ENCODE measurements at regions of chr9 and their contacts with region 1.

Region 1: DNA sequence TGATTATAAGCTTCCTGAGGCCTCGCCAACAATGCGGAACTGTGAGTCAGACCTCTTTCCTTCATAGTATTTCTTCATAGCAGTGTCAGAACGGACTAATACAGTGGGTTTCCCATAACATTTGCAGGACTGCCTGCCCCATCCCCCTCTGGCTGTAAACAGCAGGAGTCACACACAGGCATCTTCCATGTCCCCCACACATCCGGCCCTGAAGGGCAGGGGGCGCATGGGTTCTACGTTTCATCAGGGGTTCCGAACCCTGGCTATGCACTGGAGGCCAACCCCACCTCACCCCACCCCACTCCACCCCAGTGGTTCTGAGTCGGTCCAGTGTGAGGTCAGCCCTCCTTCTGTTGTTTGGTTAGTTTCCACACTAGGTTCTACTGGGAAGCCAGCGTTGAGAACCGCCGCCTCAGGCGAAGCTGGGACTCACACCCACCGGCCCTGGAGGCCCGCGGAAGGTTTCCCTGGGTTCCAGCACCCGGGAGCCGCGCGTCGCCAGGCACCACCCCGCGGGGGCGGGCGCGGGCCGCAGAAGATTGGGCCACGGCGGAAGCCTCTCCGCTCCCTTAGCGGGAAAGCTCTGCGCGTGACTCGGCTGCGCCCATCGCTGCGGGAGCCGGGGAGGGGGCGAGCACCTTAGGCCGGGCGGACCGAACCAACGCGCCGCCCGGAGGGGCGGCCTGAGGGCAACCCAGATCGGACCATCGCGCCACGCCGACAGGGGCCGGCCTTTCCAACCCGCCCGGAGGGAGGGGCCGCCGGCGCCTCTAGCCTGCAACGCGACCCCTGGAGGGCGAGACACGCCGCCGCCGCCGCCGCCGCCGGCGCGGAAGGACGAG is at the start of gene RUSC2:
- DNase-seq: peak; percentile 73 to 91 (median 83)

Region 2: DNA sequence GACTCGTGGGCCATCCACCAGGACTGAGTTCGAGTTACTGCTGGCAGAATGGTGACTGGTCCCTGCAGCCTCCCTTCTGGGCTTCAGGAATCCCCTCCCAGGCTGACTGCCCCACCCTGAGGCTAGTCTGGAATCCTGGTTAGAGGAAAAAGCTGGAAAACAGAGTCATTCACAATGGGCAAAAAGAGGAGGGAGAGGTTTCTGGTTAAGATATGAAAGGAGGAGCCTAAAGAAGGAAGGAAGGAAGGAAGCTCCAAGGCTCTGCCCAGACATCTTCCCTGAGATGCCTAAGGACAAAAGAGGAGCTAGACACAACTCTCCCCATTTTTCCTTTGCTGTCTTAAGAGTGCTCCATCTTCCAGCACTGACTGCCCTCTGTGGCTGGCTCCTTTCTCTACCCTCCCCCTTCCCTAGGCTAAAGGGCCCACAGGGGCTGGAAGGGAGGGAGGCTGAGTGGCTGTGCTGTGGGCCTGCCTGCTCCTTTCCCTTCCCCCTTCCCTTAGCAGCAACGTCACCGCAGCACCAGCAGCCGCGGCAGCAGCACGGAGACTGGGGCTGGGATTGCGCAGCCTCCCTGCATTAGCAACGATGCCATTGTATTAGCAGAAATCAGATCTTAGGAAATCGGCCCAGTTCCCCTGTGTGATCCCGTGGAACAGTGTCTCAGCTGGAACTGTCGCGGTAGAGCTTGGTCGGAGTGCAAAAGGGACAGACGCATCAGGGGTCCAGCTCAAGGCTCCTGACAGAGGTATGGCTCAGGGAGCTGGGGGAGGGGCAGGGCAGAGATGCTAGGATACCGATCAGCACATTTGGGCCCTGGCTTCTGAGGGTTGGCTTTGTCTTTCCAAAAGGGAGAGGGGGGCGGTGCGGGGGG is 49.1 kb after region 1 on chr9:
- intact Hi-C with region 1: loop called (anchors 5 kb)
- DNase-seq: peak; percentile 74 to 93 (median 87)

Region 3: DNA sequence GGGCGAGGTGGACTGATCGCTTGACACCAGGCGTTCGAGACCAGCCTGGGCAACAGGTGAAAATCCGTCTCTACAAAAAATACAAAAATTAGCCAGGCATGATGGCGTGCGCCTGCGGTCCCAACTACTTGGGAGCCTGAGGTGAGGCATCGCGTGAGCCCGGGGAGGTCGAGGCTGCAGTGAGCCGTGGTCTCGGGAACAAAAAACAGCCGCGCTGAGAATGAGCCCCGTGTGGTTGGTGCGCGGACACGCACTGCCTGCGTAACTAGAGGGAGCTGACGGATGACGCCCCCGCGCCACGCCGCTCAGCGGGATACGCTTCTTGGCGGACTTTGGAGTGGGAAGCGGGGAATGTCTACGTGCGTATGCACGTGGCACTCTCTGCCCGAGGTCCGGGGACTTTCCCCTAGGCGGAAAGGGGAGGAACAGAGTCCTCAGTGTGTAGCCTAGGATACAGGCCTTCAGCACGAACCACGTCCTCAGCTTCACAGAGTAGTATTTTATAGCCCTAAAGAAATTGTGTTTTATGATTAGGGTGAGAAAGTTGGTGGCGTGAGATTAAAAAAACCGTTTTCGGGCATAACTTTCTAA is 168.1 kb after region 1 on chr9 and contains the start of gene RMRP:
- intact Hi-C with region 1: no loop called
- DNase-seq: peak; percentile 89 to 100 (median 98)